ENCODE measurements at regions of chrX and their contacts with region 1.

Region 1: GRCh38 chrX:24506055-24506454 is 41.0 kb downstream of the PDK3 start:
- DNase-seq: no peak
- H3K4me3 ChIP-seq: no peak overlapping the region
- H3K4me1 ChIP-seq: no peaks in the 10 kb centered on the region
- H3K27me3 ChIP-seq: no peaks in the 10 kb centered on the region

Region 2: GRCh38 chrX:24259544-24260240 is 246.4 kb before region 1 on chrX:
- in situ Hi-C with region 1: loop called (anchors 10 kb)
- DNase-seq: peak; percentile 63 to 65
- H3K4me3 ChIP-seq: no peak overlapping the region
- H3K4me1 ChIP-seq: no peaks in the 10 kb centered on the region
- H3K27me3 ChIP-seq: no peaks in the 10 kb centered on the region